Activated naive CD4-positive, alpha-beta T cell treated with anti-CD3 and anti-CD28 coated beads, Interleukin-2, amount 10 ng/mL, durations not matched to agents 7 days and 5 days (primary cell): ENCODE measurements at regions of chr1 and their contacts with region 1.

Region 1: GRCh38 chr1:241627453-241628259 is 12.5 kb downstream of the CHML start:
- DNase-seq: peak; percentile 60
- H3K4me3 Mint-ChIP-seq: peak overlapping the region; percentile 62
- H3K27ac Mint-ChIP-seq: peak overlapping the region; percentile 96
- H3K4me1 Mint-ChIP-seq: peaks cover 23% of the 10 kb centered on the region
- H3K27me3 Mint-ChIP-seq: no peaks in the 10 kb centered on the region

Region 2: DNA sequence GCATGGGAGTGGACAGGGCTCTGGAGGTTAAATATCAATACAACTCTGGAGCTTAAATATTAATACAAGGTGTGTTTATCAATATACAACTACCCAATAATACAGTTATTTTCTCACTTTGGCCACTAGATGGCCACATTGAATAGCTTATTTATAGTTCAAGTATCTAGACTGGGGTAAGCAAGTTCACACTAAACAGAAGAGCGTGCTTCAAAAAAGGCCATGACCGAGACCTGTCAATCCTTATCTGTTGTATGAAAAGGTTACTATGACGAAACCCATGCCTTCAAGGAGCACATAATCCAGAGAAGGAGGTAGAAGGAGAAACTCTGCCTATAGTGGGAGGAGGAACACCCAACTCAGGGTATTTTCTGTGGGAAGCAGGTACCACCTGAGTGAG is 16.6 kb before region 1 on chr1:
- CTCF ChIA-PET with region 1: interaction called, 26 read pairs
- DNase-seq: peak; percentile 25
- H3K4me3 Mint-ChIP-seq: no peak overlapping the region
- H3K27ac Mint-ChIP-seq: no peak overlapping the region
- H3K4me1 Mint-ChIP-seq: no peaks in the 10 kb centered on the region
- H3K27me3 Mint-ChIP-seq: no peaks in the 10 kb centered on the region